AG04449 (cell line): ENCODE measurements at regions of chr9 and their contacts with region 1.

Region 1: GRCh38 chr9:133149126-133150107 is 14.3 kb downstream of the GBGT1 start:
- DNase-seq: no peak
- H3K4me3 ChIP-seq: peak overlapping the region; percentile 79
- CTCF ChIP-seq: peak; percentile 27

Region 2: DNA sequence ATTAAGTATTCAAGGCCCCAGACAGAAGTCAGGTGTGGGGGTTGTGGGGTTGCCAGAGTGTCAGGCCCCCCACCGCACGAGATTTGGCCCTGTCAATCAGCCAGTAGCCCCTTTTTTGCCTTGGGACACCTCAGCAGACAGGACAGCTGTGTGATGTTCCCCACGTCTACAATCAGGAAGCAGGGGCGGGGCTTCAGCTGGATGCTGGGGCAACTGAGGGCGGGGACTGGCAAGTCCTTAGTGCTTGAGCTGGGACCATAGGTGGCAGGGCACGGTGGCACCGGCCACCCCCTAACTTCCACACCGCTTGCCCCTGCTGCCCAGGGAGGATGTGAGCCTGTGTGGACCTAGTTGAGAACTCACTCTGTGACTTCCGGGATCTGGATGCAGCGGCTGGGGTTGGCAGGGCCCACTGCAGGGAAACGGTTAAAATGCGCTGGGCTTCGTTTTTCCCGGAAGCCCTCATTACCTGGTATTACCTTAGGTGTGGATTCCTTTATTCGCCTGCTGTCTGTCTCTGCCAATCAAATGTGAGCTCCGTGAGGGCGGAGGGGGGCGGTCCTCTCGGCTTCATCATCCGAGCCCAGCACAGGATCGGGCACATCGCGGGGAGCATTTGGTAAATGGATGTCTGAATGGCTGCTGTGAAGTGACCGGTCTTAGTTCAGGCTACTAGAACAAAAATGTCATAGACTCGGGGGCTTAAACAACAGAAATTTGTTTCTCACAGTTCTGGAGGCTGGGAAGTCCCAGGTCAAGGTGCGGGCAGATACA is 126.1 kb before region 1 on chr9:
- CTCF ChIA-PET with region 1: interaction called, 85 read pairs
- POLR2A ChIA-PET with region 1: interaction called, 3 read pairs
- DNase-seq: no peak
- H3K4me3 ChIP-seq: no peak overlapping the region
- CTCF ChIP-seq: no peak

Region 3: GRCh38 chr9:133048569-133048968 is 100.8 kb before region 1 on chr9:
- CTCF ChIA-PET with region 1: interaction called, 462 read pairs
- POLR2A ChIA-PET with region 1: no interaction called
- DNase-seq: no peak
- H3K4me3 ChIP-seq: no peak overlapping the region
- CTCF ChIP-seq: peak; percentile 55

Region 4: GRCh38 chr9:133121198-133121939 is 28.0 kb before region 1 on chr9 and contains the start of gene RALGDS:
- CTCF ChIA-PET with region 1: interaction called, 739 read pairs
- POLR2A ChIA-PET with region 1: no interaction called
- DNase-seq: no peak
- H3K4me3 ChIP-seq: peak within 1 kb of the TSS; percentile 67
- CTCF ChIP-seq: no peak

Region 5: GRCh38 chr9:133160742-133161546 is 11.5 kb after region 1 on chr9:
- CTCF ChIA-PET with region 1: interaction called, 130 read pairs
- POLR2A ChIA-PET with region 1: interaction called, 4 read pairs
- DNase-seq: no peak
- H3K4me3 ChIP-seq: no peak overlapping the region
- CTCF ChIP-seq: peak; percentile 77